Caco-2 (cell line): ENCODE measurements at regions of chr16 and their contacts with region 1.

Region 1: DNA sequence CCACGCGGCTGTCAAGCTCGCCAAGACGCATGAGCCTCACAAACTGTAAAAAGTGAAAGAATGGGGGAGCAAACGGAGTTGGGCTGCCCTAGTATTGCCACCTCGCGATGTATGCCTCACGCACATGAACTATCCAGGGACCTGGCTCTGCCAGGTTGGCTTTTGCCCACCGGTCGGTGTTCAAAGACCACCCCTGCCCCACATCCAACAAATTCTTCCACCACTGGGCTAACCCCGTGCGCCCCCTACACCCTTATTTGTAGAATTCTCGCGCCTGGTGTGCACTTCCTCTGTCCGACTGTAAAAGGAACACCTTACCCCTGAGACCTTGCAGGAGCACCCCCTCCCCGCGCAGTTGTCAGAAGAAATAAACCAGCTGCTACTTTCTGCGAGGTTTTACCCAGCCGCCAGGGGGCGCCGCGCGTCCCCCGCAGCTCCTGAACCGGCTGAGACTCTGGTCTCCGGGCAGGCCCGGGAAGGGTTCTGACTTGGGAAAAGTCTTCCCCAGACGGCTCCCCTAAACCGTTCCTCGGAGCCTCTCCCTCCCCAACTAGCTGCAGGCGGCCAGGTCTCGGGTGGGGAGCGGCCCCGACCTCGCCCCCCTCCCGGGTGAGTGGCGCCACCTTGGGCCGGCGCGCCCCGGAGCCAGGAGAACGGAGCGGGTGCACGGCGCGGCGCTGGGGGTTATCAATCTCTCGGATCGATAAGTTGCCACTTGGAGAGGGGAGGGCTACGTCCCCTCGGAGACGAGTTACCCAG is 1.7 kb upstream of the ZNF423 start:
- DNase-seq: peak; percentile 75 to 83
- H3K4me3 ChIP-seq: peak overlapping the region; percentile 30
- H3K4me3 Mint-ChIP-seq: peak overlapping the region; percentile 86
- H3K27ac Mint-ChIP-seq: no peak overlapping the region
- H3K4me1 ChIP-seq: peaks cover 30% of the 10 kb centered on the region
- H3K4me1 Mint-ChIP-seq: peaks cover 14% of the 10 kb centered on the region
- H3K27me3 ChIP-seq: peaks cover 6% of the 10 kb centered on the region
- H3K27me3 Mint-ChIP-seq: peaks cover 25% of the 10 kb centered on the region
- CTCF ChIP-seq: peak; percentile 92 to 96

Region 2: DNA sequence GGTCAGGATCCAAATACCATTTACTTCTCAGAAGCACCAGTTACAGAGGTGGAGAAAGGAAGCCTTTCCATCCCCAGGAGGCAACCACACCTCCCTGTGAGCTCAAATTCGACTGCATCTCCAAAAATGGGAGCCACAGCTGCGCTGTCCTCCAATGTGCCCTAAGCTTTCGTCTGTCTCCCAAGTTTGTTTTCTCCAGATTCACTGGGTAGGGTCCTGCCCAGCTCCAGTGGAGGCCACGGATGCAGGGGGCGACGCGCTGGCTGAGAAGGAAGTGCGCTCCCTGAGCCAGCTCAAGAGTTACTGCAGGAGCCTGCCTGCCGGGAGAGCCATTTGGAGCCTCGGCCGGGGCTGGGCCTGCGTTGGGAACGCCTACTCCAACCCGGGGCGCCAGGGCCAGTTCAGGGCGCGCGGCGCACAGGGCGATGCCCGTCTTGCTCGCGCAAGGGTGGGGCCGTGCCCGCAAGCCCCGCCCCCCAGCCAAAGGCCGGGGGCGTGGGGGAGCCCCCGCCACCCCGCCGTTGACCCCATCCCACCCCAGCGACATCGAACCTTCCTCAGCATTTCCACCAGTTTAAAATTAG is 1491.9 kb before region 1 on chr16:
- CTCF ChIA-PET with region 1: no interaction called
- POLR2A ChIA-PET with region 1: no interaction called
- intact Hi-C with region 1: no loop called
- DNase-seq: peak; percentile 87 to 92
- H3K4me3 ChIP-seq: peak overlapping the region; percentile 54
- H3K4me3 Mint-ChIP-seq: peak overlapping the region; percentile 86
- H3K27ac Mint-ChIP-seq: peak overlapping the region; percentile 94
- H3K4me1 ChIP-seq: peaks cover 20% of the 10 kb centered on the region
- H3K4me1 Mint-ChIP-seq: no peaks in the 10 kb centered on the region
- H3K27me3 ChIP-seq: no peaks in the 10 kb centered on the region
- H3K27me3 Mint-ChIP-seq: no peaks in the 10 kb centered on the region
- CTCF ChIP-seq: no peak

Region 3: DNA sequence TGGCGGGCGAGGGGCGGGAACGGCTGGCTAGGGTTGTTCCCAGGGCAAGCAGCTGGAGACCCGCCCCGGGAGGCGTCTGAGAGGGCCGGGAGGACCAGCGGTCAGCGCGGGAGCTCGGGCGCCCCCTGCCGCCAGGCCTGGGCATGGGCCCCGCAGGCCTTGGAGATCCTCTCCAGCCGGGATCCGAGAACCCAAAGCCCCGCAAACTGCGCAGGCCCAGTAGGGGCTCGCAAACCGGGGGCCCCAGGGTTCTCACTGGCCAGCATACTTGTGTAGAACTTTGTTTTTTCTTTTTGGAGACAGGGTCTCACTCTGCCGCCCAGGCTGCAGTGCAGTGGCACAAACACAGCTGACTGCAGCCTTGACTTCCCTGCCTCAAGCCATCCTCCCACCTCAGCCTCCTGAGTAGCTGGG is 19.1 kb after region 1 on chr16:
- CTCF ChIA-PET with region 1: interaction called, 21 read pairs
- POLR2A ChIA-PET with region 1: no interaction called
- intact Hi-C with region 1: no loop called
- DNase-seq: peak; percentile 68 to 69
- H3K4me3 ChIP-seq: no peak overlapping the region
- H3K4me3 Mint-ChIP-seq: no peak overlapping the region
- H3K27ac Mint-ChIP-seq: no peak overlapping the region
- H3K4me1 ChIP-seq: peaks cover 14% of the 10 kb centered on the region
- H3K4me1 Mint-ChIP-seq: peaks cover 7% of the 10 kb centered on the region
- H3K27me3 ChIP-seq: no peaks in the 10 kb centered on the region
- H3K27me3 Mint-ChIP-seq: no peaks in the 10 kb centered on the region
- CTCF ChIP-seq: peak; percentile 51 to 75